Activated CD4-positive, alpha-beta T cell treated with anti-CD3 and anti-CD28 coated beads, Interleukin-2, amount 10 ng/mL, durations not matched to agents 24 days and 14 days (primary cell): ENCODE measurements at regions of chr7 and their contacts with region 1.

Region 1: GRCh38 chr7:140403878-140404564 is at the start of gene RAB19:
- DNase-seq: peak; percentile 88
- H3K4me3 Mint-ChIP-seq: peak within 1 kb of the TSS; percentile 90
- H3K27ac Mint-ChIP-seq: peak within 1 kb of the TSS; percentile 97
- H3K4me1 Mint-ChIP-seq: peaks cover 34% of the 10 kb centered on the region
- H3K27me3 Mint-ChIP-seq: no peaks in the 10 kb centered on the region
- total RNA-seq, gene RAB19: 23.0 and 24.4 TPM in 2 replicates

Region 2: DNA sequence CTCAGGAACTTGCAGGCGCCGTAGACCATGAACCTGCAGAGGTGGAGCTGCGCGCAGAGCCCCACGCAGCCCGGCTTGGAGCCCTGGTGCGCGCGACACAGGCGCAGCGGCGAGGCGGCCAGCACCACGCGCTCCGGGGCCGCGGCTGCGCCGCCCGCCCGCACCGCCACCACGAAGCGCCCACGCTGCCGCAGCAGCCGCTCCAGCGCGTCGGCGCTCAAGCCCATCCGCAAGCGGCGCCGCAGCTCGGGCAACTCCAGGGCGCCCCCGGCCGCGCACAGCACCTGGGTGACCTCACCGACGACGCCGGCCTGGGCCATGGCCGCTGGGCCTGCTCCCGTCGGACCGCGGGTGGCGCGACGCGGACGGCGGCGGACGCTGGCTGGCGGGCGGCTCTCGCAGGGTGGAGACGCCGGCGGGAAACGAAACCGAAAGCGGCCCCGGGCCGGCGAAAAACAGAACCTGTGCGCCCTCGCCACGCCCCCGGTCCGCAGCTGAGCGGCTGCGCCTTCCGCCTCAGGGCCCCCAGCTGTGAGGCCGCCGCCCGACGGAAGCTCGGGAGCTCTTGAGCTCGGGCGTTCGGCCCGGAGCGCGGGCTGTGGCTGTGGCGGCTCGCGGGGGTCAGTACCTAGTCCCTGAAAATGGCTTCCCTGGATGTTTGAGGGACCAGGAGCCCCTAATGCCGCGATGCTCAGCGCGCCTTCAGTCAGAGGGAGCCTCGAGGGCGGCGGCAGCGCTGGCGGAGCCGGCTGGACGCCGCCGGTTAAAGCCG is 341.3 kb before region 1 on chr7 and contains the start of gene PARP12:
- intact Hi-C with region 1: loop called (anchors 5 kb)
- DNase-seq: peak; percentile 97
- H3K4me3 Mint-ChIP-seq: peak within 1 kb of the TSS; percentile 83
- H3K27ac Mint-ChIP-seq: peak within 1 kb of the TSS; percentile 94
- H3K4me1 Mint-ChIP-seq: peaks cover 48% of the 10 kb centered on the region
- H3K27me3 Mint-ChIP-seq: peaks cover 2% of the 10 kb centered on the region
- total RNA-seq, gene PARP12: 53.3 and 55.9 TPM in 2 replicates

Region 3: DNA sequence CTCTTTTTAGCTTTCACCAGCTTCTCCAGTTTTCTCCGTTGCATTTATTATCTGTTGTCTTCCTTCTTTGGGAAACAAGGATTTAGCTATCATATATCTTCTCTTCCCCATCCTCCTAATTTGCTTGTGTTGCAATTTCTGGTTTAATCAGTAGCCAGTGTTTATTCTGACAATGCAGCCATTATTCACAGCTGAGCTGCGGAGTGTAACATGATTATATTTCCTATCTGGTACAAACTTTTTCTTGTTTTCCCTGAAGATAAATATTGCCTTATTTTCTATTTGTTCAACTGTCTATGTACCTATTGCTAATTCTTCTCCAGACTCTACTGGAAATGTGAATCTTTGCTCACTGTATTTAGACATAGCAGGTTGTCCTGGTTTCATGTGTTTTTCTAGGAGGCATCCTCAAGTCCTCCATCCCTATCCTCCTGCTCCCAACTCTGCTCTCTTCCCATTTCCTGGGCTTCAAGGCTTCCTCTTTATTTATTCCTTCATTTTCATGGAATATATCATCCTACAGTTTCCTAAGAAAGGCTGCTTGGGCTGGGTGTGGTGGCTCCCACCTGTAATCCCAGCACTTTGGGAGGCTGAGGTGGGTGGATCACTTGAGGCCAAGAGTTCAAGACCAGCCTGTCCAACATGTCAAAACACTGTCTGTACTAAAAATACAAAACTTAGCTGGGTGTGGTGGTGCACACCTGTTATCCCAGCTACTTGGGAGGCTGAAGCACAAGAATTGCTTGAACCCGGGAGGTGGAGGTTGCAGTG is 154.8 kb before region 1 on chr7:
- intact Hi-C with region 1: loop called (anchors 5 kb)
- DNase-seq: no peak
- H3K4me3 Mint-ChIP-seq: no peak overlapping the region
- H3K27ac Mint-ChIP-seq: no peak overlapping the region
- H3K4me1 Mint-ChIP-seq: peaks cover 21% of the 10 kb centered on the region
- H3K27me3 Mint-ChIP-seq: no peaks in the 10 kb centered on the region

Region 4: GRCh38 chr7:140358412-140359051 is 45.5 kb before region 1 on chr7:
- intact Hi-C with region 1: loop called (anchors 1 kb)
- DNase-seq: peak; percentile 71
- H3K4me3 Mint-ChIP-seq: peak overlapping the region; percentile 68
- H3K27ac Mint-ChIP-seq: peak overlapping the region; percentile 94
- H3K4me1 Mint-ChIP-seq: peaks cover 28% of the 10 kb centered on the region
- H3K27me3 Mint-ChIP-seq: no peaks in the 10 kb centered on the region

Region 5: DNA sequence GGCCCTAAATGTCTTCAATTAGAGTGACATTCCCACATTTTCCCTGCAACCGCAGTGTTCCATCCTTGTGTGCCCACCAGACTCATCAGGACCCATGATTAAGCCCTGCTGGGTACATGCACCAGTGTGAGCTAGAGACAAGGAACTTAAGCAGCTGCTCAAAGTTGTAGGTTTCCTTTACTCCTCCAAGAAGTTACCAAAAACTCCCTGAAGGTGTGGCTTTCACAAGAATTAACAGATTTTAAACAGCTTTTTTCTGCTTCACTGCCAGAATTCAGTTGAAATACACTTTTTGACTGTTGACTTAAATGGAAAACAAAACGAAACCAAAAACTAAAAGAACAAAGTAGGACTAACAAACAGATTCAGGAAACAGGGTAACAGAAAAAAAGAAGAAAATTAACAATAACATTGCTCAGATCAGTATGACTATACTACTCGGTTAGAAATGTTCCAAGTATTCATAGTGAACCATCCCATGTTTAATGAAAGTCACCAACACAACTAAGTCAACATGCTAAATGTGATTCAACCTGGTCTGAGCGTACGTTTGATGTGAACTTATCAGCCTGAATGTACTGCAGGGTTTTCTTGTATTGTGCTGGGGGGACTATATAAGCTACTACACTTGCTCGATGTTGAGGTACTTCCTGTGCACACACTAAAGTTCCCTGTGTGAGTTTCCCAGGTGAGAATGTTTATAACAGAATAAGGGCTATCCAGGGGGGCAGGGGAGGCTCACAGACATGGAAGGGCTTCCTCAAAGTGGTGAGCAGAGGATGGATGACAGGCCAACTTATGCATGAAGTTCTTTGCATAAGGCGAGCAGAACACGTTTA is 27.9 kb before region 1 on chr7:
- intact Hi-C with region 1: loop called (anchors 1 kb)
- DNase-seq: peak; percentile 84
- H3K4me3 Mint-ChIP-seq: peak overlapping the region; percentile 78
- H3K27ac Mint-ChIP-seq: peak overlapping the region; percentile 99
- H3K4me1 Mint-ChIP-seq: peaks cover 40% of the 10 kb centered on the region
- H3K27me3 Mint-ChIP-seq: no peaks in the 10 kb centered on the region

Region 6: GRCh38 chr7:140390466-140391190 is 13.4 kb before region 1 on chr7:
- intact Hi-C with region 1: loop called (anchors 1 kb)
- DNase-seq: peak; percentile 68
- H3K4me3 Mint-ChIP-seq: no peak overlapping the region
- H3K27ac Mint-ChIP-seq: no peak overlapping the region
- H3K4me1 Mint-ChIP-seq: peaks cover 7% of the 10 kb centered on the region
- H3K27me3 Mint-ChIP-seq: no peaks in the 10 kb centered on the region

Region 7: DNA sequence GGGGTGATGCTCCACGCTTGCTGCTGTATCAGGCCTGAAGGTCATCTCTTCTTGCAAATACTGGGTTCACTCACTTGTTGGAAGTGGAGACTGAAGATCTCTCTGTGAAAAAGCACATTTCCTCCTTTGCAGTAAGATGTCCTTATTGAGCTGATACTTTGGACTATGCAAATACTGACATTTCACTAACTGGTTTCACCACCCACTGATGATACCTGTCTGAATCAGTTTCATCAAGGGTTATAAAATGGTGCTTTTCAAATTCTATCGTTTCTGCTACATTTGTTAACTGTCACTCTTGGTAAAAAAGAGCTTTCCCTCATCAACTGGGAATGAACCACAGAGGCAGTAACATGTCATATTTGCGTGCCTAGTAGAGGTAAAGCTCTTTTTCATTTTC is 35.3 kb after region 1 on chr7:
- intact Hi-C with region 1: loop called (anchors 1 kb)
- DNase-seq: no peak
- H3K4me3 Mint-ChIP-seq: no peak overlapping the region
- H3K27ac Mint-ChIP-seq: peak overlapping the region; percentile 84
- H3K4me1 Mint-ChIP-seq: peaks cover 14% of the 10 kb centered on the region
- H3K27me3 Mint-ChIP-seq: no peaks in the 10 kb centered on the region

Region 8: GRCh38 chr7:140828741-140829140 is 424.7 kb after region 1 on chr7:
- intact Hi-C with region 1: no loop called
- DNase-seq: no peak
- H3K4me3 Mint-ChIP-seq: no peak overlapping the region
- H3K27ac Mint-ChIP-seq: no peak overlapping the region
- H3K4me1 Mint-ChIP-seq: no peaks in the 10 kb centered on the region
- H3K27me3 Mint-ChIP-seq: no peaks in the 10 kb centered on the region